ENCODE measurements at regions of chr4 and their contacts with region 1.

Region 1: GRCh38 chr4:25129917-25130316 is 30.3 kb downstream of the SEPSECS start:
- DNase-seq: no peak
- ATAC-seq: no peak
- H3K4me3 ChIP-seq: no peak overlapping the region
- H3K27ac ChIP-seq: no peak overlapping the region
- H3K4me1 ChIP-seq: peaks cover 0 to 11% (median 3%) of the 10 kb centered on the region in 12 donors
- H3K27me3 ChIP-seq: no peaks in the 10 kb centered on the region
- CTCF ChIP-seq: no peak
- POLR2A ChIP-seq: no peak

Region 2: GRCh38 chr4:25088093-25088952 is 41.6 kb before region 1 on chr4:
- intact Hi-C with region 1: loop called in 1 of 10 experiments (anchors 10 kb)
- DNase-seq: peak; percentile 63 to 84 (median 67)
- ATAC-seq: peak; percentile 86 to 94 (median 92)
- H3K4me3 ChIP-seq: peak overlapping the region in 11 of 12 donors; percentile 18 to 58 (median 43)
- H3K27ac ChIP-seq: peak overlapping the region in 11 of 12 donors; percentile 50 to 91 (median 77)
- H3K4me1 ChIP-seq: peaks cover 0 to 41% (median 23%) of the 10 kb centered on the region in 12 donors
- H3K27me3 ChIP-seq: peaks cover 0 to 16% (median 0%) of the 10 kb centered on the region in 9 donors
- CTCF ChIP-seq: no peak
- POLR2A ChIP-seq: no peak

Measured in heart left ventricle (tissue), 16 donors.